ENCODE measurements at regions of chr16 and their contacts with region 1.

Region 1: GRCh38 chr16:75622761-75623605 is at the start of gene ADAT1:
- DNase-seq: peak; percentile 96
- H3K4me3 Mint-ChIP-seq: peak within 1 kb of the TSS; percentile 90
- H3K27ac Mint-ChIP-seq: peak within 1 kb of the TSS; percentile 98
- H3K4me1 Mint-ChIP-seq: peaks cover 54% of the 10 kb centered on the region
- H3K27me3 Mint-ChIP-seq: no peaks in the 10 kb centered on the region
- total RNA-seq, gene ADAT1: 59.0 and 60.9 TPM in 2 replicates

Region 2: GRCh38 chr16:74666425-74667254 is 956.3 kb before region 1 on chr16 and contains the start of gene RFWD3:
- intact Hi-C with region 1: loop called (anchors 2 kb)
- DNase-seq: peak; percentile 96
- H3K4me3 Mint-ChIP-seq: peak within 1 kb of the TSS; percentile 91
- H3K27ac Mint-ChIP-seq: peak within 1 kb of the TSS; percentile 96
- H3K4me1 Mint-ChIP-seq: peaks cover 43% of the 10 kb centered on the region
- H3K27me3 Mint-ChIP-seq: no peaks in the 10 kb centered on the region
- total RNA-seq, gene RFWD3: 112 and 116 TPM in 2 replicates

Region 3: GRCh38 chr16:75379911-75380847 is 242.8 kb before region 1 on chr16:
- intact Hi-C with region 1: loop called (anchors 5 kb)
- DNase-seq: peak; percentile 21
- H3K4me3 Mint-ChIP-seq: peak overlapping the region; percentile 41
- H3K27ac Mint-ChIP-seq: peak overlapping the region; percentile 36
- H3K4me1 Mint-ChIP-seq: peaks cover 27% of the 10 kb centered on the region
- H3K27me3 Mint-ChIP-seq: peaks cover 40% of the 10 kb centered on the region

Region 4: DNA sequence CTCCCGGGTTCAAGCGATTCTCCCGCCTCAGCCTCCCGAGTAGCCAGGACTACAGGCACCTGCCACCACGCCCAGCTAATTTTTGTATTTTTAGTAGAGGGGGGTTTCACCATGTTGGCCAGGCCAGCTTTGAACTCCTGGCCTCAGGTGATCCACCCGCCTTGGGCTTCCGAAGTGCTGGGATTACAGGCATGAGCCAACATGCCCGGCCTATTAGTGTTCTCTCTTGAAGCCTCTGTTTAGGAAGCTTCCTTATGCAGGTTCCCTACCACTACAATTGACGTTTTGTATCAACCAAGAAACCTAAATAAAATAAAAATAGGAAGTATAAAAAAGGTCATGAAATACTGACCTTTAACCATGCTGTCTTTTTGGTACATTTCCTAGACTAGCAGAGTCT is 103.1 kb before region 1 on chr16:
- intact Hi-C with region 1: loop called (anchors 1 kb)
- DNase-seq: no peak
- H3K4me3 Mint-ChIP-seq: no peak overlapping the region
- H3K27ac Mint-ChIP-seq: no peak overlapping the region
- H3K4me1 Mint-ChIP-seq: peaks cover 5% of the 10 kb centered on the region
- H3K27me3 Mint-ChIP-seq: peaks cover 5% of the 10 kb centered on the region

Region 5: GRCh38 chr16:75566040-75566810 is 56.8 kb before region 1 on chr16 and contains the start of gene GABARAPL2:
- intact Hi-C with region 1: loop called (anchors 1 kb)
- DNase-seq: peak; percentile 87
- H3K4me3 Mint-ChIP-seq: peak within 1 kb of the TSS; percentile 99
- H3K27ac Mint-ChIP-seq: peak within 1 kb of the TSS; percentile 90
- H3K4me1 Mint-ChIP-seq: peaks cover 28% of the 10 kb centered on the region
- H3K27me3 Mint-ChIP-seq: peaks cover 5% of the 10 kb centered on the region
- total RNA-seq, gene GABARAPL2: 62.7 and 69.5 TPM in 2 replicates

Region 6: DNA sequence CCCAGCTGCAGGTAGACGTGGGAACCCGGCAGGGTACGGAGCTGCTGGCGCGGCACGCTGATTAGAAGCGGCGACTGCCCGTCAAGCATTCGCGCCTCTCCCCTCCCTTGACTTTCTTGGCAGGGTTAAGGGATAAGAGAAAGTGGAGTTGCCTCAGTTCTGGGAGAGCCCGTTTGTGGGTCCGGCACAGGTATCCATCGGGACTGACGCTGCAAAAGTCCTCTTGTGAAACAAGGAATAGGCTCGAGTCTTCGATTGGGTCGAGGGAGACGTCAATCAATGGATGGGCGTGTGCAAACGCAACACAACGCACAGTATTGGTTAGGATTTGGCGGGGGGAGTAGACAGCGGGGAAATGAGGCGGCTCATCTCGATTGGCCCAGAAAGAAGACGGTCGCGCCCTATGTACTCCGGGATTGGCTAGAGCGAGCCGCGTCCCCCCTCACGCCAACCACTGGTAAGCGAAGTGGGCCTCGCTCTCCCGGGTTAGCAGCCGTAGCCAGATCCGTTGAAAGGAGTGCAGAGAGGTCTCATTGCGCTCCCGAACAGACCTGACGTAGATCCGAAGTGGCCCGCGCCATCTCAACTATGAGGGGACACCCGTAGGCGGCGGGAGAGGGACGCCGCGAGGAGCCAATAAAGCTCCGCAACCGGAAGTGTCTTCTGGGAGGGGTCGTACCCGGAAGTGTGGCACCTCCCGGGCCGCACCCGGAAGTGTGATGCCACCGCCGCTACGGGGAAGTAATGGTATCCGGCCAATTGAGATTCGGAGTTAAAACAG is 1567.7 kb after region 1 on chr16 and contains the start of gene MON1B:
- intact Hi-C with region 1: loop called (anchors 1 kb)
- DNase-seq: peak; percentile 93
- H3K4me3 Mint-ChIP-seq: peak within 1 kb of the TSS; percentile 97
- H3K27ac Mint-ChIP-seq: peak within 1 kb of the TSS; percentile 100
- H3K4me1 Mint-ChIP-seq: peaks cover 39% of the 10 kb centered on the region
- H3K27me3 Mint-ChIP-seq: peaks cover 4% of the 10 kb centered on the region
- total RNA-seq, gene MON1B: 66.2 and 70.1 TPM in 2 replicates

Measured in activated T-helper 1 cell treated with anti-CD3 and anti-CD28 coated beads, Interleukin-12 subunit alpha, Interleukin-12 subunit beta, Interleukin-2, Interleukin-4 antibody, amounts not matched to agents 30 ng/mL and 10 ng/mL and 1 ng/mL, durations not matched to agents 14 hours and 24 hours and 36 hours (primary cell).